Common myeloid progenitor, CD34-positive (primary cell): ENCODE measurements at regions of chr3 and their contacts with region 1.

Region 1: DNA sequence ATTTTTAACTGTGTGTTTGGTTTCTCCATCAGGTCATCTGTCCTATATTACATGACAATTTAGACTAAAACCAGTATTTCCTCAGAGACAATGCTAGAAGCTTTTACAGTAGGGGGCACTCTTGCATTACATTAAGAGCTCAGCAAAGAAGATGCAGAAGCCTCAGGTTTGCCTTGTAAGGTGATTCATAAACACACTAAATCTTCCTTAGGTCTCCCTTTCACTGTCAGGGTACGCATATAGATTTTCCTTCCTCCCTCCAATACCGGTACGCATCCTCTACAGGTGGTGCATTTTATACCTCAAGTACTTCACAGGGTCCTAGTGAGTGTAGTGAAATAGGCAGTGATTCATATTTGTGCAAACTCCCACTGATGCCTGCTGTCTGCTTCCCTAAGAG is 46.5 kb downstream of the CD86 start:
- DNase-seq: peak; percentile 81 to 89 (median 86)
- H3K4me3 ChIP-seq: no peak overlapping the region
- H3K27ac ChIP-seq: no peak overlapping the region
- H3K4me1 ChIP-seq: peaks cover 0 to 7% (median 5%) of the 10 kb centered on the region in 4 experiments
- H3K27me3 ChIP-seq: no peaks in the 10 kb centered on the region

Region 2: DNA sequence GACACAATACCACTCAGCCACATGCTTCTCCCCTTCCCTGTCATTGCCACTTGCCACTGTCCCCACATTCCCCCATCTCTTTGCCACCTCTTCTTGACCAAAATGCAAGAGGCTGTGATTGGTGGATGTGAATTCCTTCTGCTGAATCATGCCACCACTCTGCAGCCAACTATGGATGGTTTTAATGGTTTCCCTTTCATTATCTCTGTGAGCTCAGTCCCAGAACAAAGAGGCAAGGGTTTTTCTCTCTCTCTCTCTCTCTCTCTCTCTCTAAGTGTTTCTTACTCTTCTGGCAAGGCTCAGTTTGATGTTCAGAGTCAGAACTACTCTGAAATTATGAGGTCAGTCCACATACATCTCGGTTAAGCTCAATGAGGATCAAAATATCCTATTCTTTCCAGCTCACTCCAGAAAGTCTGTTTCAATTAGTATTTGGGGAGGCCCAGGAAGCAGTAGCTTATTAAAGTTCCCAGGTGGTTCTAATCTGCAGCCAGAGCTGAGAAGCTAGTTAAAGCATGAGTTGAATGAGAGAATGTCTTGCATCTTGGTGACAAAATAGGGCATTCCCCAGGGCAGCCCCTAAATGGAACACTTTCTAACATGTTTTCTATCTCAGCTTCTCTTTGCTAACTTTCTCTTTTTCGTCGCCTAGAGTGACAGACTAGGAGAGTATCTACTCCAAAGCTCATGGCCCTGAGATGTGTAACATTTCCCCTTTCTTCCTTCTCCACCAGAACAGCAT is 71.1 kb before region 1 on chr3:
- CTCF ChIA-PET with region 1: no interaction called
- POLR2A ChIA-PET with region 1: no interaction called
- DNase-seq: peak; percentile 47 to 88 (median 83)
- H3K4me3 ChIP-seq: no peak overlapping the region
- H3K27ac ChIP-seq: peak overlapping the region in 1 of 2 experiments; percentile 31
- H3K4me1 ChIP-seq: peaks cover 0 to 10% (median 7%) of the 10 kb centered on the region in 4 experiments
- H3K27me3 ChIP-seq: no peaks in the 10 kb centered on the region

Region 3: GRCh38 chr3:122258757-122259371 is 157.2 kb after region 1 on chr3:
- CTCF ChIA-PET with region 1: interaction called, 202 read pairs
- POLR2A ChIA-PET with region 1: no interaction called
- DNase-seq: peak; percentile 71 to 87 (median 77)
- H3K4me3 ChIP-seq: no peak overlapping the region
- H3K27ac ChIP-seq: no peak overlapping the region
- H3K4me1 ChIP-seq: peaks cover 2 to 17% (median 10%) of the 10 kb centered on the region in 4 experiments
- H3K27me3 ChIP-seq: no peaks in the 10 kb centered on the region

Region 4: GRCh38 chr3:122265957-122266356 is 164.3 kb after region 1 on chr3:
- CTCF ChIA-PET with region 1: interaction called, 202 read pairs
- POLR2A ChIA-PET with region 1: no interaction called
- DNase-seq: peak in 1 of 3 donors; percentile 37
- H3K4me3 ChIP-seq: no peak overlapping the region
- H3K27ac ChIP-seq: no peak overlapping the region
- H3K4me1 ChIP-seq: peaks cover 0 to 14% (median under 1%) of the 10 kb centered on the region in 4 experiments
- H3K27me3 ChIP-seq: no peaks in the 10 kb centered on the region

Region 5: DNA sequence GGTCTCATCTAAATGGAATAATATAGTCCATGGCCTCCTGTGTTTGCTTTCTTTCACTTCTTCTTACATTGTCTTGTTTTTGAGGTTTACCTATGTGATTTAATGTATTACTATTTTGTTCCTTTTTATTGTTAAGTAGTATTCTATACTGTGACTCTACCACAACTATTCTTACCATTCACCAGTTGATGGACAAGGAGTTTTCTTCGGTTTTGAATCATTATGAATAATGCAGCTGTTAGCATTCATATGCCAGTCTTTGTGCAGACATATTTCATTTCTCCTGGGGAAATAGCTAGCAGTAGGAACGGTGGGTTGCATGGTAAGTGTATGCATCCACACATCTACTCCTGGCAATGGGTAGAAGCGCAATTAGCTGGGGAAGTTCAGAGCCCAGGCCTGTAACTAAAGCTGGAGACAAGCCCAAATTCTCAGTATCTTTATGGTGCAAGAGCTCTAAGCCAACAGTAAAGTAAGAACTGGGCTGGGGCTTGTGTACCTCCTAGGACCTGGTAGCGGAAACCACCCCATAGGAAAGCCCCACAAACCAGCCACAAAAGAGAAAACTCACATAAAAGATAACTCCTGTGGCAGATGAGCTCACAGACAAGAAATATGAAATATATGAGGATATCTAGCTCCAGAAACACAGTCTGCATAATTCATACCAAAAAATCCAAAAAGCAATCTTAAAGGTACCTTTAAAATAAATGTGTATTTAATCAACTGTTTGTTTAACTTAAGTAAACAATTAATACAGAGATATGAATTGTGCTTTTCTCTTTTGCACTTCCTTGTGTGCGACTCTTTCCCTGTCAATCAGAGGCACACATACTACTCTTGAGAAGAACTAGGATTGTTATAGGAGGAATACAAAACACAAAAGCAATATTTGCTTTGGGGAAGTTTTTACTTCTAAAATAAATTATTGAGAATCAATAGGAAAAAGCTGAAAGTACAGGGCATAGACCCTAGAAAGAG is 220.7 kb after region 1 on chr3:
- CTCF ChIA-PET with region 1: no interaction called
- POLR2A ChIA-PET with region 1: no interaction called
- DNase-seq: peak in 2 of 3 donors; percentile 15 to 33
- H3K4me3 ChIP-seq: no peak overlapping the region
- H3K27ac ChIP-seq: no peak overlapping the region
- H3K4me1 ChIP-seq: no peaks in the 10 kb centered on the region
- H3K27me3 ChIP-seq: peaks cover 0 to 2% (median 2%) of the 10 kb centered on the region in 5 experiments